Common myeloid progenitor, CD34-positive (primary cell): ENCODE measurements at regions of chr5 and their contacts with region 1.

Region 1: GRCh38 chr5:180090098-180090768 is 18.7 kb upstream of the RNF130 start:
- DNase-seq: peak; percentile 75 to 86 (median 86)
- H3K4me3 ChIP-seq: peak overlapping the region; percentile 19 to 78 (median 67)
- H3K27ac ChIP-seq: no peak overlapping the region
- H3K4me1 ChIP-seq: peaks cover 13 to 55% (median 41%) of the 10 kb centered on the region in 4 experiments
- H3K27me3 ChIP-seq: no peaks in the 10 kb centered on the region

Region 2: DNA sequence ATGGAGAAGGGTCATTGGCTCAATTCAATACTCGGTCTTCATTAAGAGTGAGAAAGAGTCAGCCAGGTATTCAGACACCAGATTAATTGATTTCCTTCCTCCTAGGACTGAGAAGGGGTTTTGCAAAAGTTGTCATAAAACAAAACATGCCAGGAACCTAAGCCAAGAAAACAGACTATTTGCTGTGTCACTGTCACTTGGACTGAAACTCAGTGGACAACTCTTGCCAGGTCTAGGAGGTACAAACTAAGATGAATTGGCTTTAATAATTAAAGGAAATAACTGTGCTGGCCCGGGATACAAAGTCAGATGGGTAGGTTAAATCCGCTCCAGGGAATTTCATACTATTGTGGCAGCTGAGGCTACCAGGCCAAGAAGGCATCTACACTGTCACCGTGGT is 111.4 kb before region 1 on chr5:
- CTCF ChIA-PET with region 1: interaction called, 11 read pairs
- POLR2A ChIA-PET with region 1: no interaction called
- DNase-seq: peak in 2 of 3 donors; percentile 35 to 54
- H3K4me3 ChIP-seq: no peak overlapping the region
- H3K27ac ChIP-seq: peak overlapping the region; percentile 4 to 47
- H3K4me1 ChIP-seq: peaks cover 0 to 8% (median 0%) of the 10 kb centered on the region in 4 experiments
- H3K27me3 ChIP-seq: no peaks in the 10 kb centered on the region

Region 3: GRCh38 chr5:180047667-180048066 is 42.6 kb before region 1 on chr5:
- CTCF ChIA-PET with region 1: interaction called, 10 read pairs
- POLR2A ChIA-PET with region 1: no interaction called
- DNase-seq: no peak
- H3K4me3 ChIP-seq: no peak overlapping the region
- H3K27ac ChIP-seq: peak overlapping the region; percentile 87 to 93
- H3K4me1 ChIP-seq: peaks cover 22 to 35% (median 32%) of the 10 kb centered on the region in 4 experiments
- H3K27me3 ChIP-seq: no peaks in the 10 kb centered on the region

Region 4: DNA sequence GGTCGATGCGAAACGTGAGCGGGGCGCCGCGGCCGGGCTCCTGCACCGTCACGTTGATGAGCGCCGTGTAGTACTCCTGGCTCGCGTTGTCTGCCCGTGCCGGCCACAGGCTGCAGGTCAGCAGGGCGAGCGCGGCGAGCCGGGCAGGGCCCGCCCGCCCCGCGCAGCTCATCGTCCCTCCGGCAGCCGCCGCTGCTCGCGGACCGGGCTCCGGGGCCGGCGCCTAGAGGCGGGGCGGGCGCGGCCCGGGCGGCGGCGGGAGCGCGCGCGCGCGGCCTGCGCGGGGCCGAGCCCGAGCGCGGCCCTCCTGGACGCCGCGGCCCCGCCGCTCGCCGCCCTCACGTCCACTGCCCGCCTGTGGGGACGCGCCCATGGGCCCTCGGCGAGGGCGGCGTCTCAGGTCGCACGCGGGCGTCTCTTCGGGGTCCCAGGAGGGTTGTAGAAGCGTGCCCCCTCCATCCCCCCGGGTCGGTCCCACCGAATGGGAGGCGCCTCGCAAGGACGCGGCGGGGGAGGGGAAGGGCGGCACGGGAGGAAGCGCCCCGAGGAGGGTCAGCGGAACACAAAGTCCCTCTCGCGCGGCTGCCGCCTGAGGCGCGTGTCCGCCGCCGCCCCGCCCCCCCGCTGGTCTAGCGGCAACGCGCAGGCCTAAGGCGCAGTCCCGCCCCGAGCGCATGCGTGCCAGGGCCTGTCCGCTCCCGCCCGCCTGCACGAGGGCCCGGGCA is 18.5 kb before region 1 on chr5 and contains the start of gene RNF130:
- CTCF ChIA-PET with region 1: interaction called, 58 read pairs
- POLR2A ChIA-PET with region 1: no interaction called
- DNase-seq: peak; percentile 90 to 93 (median 91)
- H3K4me3 ChIP-seq: peak within 1 kb of the TSS; percentile 73 to 96 (median 85)
- H3K27ac ChIP-seq: peak within 1 kb of the TSS; percentile 64 to 78
- H3K4me1 ChIP-seq: peaks cover 11 to 42% (median 36%) of the 10 kb centered on the region in 4 experiments
- H3K27me3 ChIP-seq: no peaks in the 10 kb centered on the region